Tibial artery (tissue), 4 donors: ENCODE measurements at regions of chr5 and their contacts with region 1.

Region 1: DNA sequence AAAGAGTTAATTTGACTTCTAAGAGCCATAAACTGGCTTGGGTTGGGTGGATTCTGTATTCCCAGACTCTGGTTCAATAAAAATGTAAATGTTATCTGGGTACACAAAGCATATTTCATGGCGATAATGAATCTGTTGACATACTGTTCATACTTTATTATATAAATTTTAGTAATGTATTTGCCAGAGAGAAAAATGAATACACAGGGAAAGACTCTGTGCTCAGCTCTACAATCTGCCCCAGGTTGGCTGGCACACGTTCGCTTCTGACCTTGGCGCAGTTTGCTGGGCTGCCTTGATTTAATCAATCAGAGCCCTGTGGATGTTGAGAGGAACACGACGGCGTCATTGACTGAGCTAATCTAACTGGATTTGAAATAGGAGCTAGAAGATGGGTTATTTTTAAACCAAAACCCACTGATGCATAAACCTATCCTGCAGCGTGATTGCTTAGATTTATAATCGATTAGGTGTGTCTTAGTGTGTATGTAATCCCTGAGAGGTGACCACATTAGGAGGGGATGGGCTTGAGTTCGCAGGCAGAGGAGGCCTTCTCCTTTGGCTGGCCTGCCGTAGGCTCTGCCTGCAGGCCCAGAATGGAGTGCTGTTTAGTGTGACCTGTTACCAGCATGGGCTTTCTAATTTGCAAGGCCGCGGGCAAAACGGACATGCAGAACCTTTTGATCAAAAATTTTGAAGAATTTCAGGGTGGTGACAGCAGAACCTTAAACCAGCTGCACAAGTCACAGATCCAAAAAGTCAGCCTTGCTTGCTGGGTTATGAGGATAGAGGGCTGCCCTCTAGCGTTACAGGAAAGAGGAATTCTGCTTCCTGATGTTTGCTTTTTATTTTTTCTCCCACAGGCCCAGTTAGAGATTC is 3.9 kb upstream of the ADCY2 start:
- DNase-seq: no peak
- H3K4me3 ChIP-seq: no peak overlapping the region
- H3K27ac ChIP-seq: no peak overlapping the region
- H3K4me1 ChIP-seq: peaks cover 0 to 17% (median 9%) of the 10 kb centered on the region in 4 donors
- H3K27me3 ChIP-seq: peaks cover 0 to 15% of the 10 kb centered on the region in 2 donors
- CTCF ChIP-seq: peak; percentile 39 to 44

Region 2: GRCh38 chr5:7493081-7493480 is 101.0 kb after region 1 on chr5:
- intact Hi-C with region 1: no loop called
- DNase-seq: no peak
- H3K4me3 ChIP-seq: no peak overlapping the region
- H3K27ac ChIP-seq: no peak overlapping the region
- H3K4me1 ChIP-seq: peaks cover 0 to 22% (median 10%) of the 10 kb centered on the region in 4 donors
- H3K27me3 ChIP-seq: no peaks in the 10 kb centered on the region
- CTCF ChIP-seq: no peak

Region 3: GRCh38 chr5:7754992-7755596 is 363.0 kb after region 1 on chr5:
- intact Hi-C with region 1: loop called (anchors 5 kb)
- DNase-seq: peak in 1 of 2 donors; percentile 69
- H3K4me3 ChIP-seq: no peak overlapping the region
- H3K27ac ChIP-seq: no peak overlapping the region
- H3K4me1 ChIP-seq: peaks cover 0 to 10% (median 4%) of the 10 kb centered on the region in 4 donors
- H3K27me3 ChIP-seq: no peaks in the 10 kb centered on the region
- CTCF ChIP-seq: peak; percentile 51 to 56

Region 4: GRCh38 chr5:7868773-7869473 is 476.9 kb after region 1 on chr5 and contains the starts of genes FASTKD3 and MTRR:
- intact Hi-C with region 1: no loop called
- DNase-seq: peak; percentile 93 to 95
- H3K4me3 ChIP-seq: peak within 1 kb of the TSS; percentile 87 to 93
- H3K27ac ChIP-seq: peak within 1 kb of the TSS; percentile 83 to 84
- H3K4me1 ChIP-seq: peaks cover 0 to 28% (median 19%) of the 10 kb centered on the region in 4 donors
- H3K27me3 ChIP-seq: no peaks in the 10 kb centered on the region
- CTCF ChIP-seq: no peak